ENCODE measurements at regions of chr1 and their contacts with region 1.

Region 1: GRCh38 chr1:203267347-203267846 is 37.9 kb upstream of the BTG2 start:
- DNase-seq: peak; percentile 29
- H3K4me3 ChIP-seq: peak overlapping the region; percentile 72
- CTCF ChIP-seq: peak; percentile 82

Region 2: DNA sequence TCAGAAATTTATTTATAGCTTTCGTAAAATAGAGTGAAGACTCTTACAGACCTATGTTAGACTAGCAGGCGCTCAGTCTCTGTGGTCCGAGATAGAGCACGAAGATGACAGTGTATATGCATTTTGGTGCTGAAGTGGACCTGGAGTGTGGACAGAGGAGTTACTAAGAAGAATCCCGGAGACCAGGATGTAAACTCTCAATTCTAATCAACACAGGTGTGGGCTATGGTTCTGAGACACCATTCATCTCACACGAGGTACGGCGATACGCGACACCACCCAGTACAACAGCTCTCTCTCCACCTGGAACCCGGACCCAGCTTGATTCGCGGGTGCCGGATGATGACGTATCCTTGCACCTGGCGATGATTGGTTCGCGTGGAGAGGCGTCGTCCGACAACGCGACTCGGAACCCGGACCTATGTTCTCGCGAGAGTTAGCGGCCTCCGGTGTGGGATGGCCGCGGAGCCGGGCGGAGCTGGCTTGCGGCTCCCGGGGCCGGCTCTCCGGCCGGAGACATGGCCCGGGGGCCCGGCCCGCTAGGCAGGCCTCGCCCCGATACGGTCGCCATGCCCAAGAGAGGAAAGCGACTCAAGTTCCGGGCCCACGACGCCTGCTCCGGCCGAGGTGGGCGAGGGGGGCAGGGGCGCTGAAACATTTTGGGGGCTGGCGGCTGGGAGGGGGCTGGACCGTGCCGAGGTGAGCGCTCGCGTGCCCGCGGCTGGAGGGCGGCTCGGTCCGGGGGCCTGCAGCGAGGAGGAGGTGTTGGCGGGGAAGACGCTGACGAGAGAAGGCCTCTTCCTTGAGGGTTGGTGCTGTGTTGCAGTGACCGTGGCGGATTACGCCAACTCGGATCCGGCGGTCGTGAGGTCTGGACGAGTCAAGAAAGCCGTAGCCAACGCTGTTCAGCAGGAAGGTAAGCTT is 260.2 kb before region 1 on chr1 and contains the start of gene TMEM183A:
- CTCF ChIA-PET with region 1: interaction called, 12 read pairs
- POLR2A ChIA-PET with region 1: no interaction called
- DNase-seq: peak; percentile 54
- H3K4me3 ChIP-seq: peak within 1 kb of the TSS; percentile 86
- CTCF ChIP-seq: no peak

Region 3: GRCh38 chr1:203057911-203058675 is 209.3 kb before region 1 on chr1:
- CTCF ChIA-PET with region 1: interaction called, 32 read pairs
- POLR2A ChIA-PET with region 1: no interaction called
- DNase-seq: no peak
- H3K4me3 ChIP-seq: no peak overlapping the region
- CTCF ChIP-seq: no peak

Region 4: DNA sequence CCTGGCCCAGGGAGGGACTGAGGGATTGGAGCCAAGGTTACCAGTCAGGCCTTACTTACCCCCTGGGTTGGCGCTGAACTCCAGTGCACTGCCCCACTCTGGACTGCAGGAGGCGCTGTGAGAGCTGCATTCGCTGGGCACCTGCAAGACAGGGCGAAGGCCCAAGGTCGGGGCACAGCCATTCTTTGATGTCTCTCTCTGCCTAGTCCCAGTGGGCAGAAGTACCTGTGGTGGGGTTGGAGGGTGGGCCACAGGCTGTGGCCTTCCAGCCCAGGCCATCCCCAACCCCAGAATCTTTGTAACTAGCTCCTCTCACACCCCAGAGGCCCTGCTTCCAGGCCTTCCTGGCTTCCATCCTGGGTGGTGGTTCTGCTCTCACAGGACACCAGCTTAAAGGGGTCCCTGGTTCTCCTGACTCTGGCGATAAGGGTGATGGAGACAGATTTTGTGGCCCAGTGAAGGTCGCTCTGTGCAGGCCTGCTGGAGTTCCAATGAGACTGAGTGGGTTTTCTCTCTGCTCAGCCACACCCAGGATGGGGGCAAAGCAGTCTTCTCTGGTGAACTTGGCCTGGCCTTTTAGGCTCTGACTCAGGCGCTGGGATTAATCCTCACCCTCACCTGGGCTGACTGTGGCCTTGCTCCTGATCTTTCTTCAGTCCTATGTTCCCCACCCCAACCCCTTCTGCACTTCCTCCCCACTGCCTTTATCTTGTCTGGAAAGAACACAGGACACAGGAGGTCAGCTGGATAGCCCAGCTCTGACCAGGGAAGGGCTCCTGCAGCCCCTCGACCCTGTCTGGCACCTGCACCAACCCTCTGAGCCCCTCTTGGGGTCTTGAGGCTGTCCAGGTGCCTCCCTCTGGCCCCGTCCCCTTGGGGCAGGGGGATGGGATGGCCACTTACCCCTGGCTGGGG is 182.6 kb before region 1 on chr1:
- CTCF ChIA-PET with region 1: interaction called, 11 read pairs
- POLR2A ChIA-PET with region 1: no interaction called
- DNase-seq: no peak
- H3K4me3 ChIP-seq: no peak overlapping the region
- CTCF ChIP-seq: peak; percentile 39

Region 5: GRCh38 chr1:203216274-203217138 is 50.9 kb before region 1 on chr1:
- CTCF ChIA-PET with region 1: interaction called, 21 read pairs
- POLR2A ChIA-PET with region 1: no interaction called
- DNase-seq: no peak
- H3K4me3 ChIP-seq: no peak overlapping the region
- CTCF ChIP-seq: peak; percentile 56

Region 6: DNA sequence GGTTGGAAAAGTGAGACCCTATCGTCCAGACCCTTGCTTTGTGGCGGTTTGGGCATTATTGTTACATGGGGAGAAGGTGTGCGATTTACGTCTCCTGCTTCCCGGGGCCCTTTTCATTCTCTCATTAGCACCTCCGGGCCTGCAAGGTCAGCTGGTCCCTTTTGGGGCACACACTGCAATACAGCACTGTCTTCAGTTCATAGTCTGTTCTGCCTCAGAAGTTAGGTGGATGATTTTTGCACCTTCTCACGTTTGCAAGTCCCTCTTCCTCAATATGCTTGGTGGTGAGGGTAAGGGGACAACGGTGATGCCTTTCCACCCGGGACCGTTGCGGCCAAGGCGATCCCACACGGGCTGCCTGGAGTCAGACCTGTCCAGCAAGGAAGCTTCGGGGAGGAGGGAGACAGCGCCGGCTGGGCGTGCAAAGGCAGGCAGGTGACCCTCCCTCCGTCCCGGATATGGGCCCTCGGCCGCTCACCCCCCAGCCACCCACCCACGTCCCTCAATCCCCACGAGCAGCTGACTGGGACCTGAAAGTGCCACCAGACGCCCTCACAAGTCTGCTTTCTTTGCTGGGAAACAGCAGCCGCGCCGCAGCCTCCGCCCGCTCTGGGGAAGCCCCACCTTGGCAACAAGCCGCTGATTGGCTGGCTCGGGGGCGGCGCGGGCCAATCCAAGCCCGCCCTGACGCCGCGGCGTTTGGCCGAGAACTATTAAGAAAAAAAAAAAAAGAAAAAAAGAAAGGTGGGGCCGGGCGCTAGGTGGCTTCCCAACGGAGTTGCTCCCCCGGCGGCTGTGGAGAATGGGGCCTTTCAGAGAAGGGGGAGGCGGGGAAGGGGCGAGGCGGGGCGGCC is 59.7 kb after region 1 on chr1:
- CTCF ChIA-PET with region 1: interaction called, 152 read pairs
- POLR2A ChIA-PET with region 1: no interaction called
- DNase-seq: no peak
- H3K4me3 ChIP-seq: peak overlapping the region; percentile 63
- CTCF ChIP-seq: no peak

Region 7: DNA sequence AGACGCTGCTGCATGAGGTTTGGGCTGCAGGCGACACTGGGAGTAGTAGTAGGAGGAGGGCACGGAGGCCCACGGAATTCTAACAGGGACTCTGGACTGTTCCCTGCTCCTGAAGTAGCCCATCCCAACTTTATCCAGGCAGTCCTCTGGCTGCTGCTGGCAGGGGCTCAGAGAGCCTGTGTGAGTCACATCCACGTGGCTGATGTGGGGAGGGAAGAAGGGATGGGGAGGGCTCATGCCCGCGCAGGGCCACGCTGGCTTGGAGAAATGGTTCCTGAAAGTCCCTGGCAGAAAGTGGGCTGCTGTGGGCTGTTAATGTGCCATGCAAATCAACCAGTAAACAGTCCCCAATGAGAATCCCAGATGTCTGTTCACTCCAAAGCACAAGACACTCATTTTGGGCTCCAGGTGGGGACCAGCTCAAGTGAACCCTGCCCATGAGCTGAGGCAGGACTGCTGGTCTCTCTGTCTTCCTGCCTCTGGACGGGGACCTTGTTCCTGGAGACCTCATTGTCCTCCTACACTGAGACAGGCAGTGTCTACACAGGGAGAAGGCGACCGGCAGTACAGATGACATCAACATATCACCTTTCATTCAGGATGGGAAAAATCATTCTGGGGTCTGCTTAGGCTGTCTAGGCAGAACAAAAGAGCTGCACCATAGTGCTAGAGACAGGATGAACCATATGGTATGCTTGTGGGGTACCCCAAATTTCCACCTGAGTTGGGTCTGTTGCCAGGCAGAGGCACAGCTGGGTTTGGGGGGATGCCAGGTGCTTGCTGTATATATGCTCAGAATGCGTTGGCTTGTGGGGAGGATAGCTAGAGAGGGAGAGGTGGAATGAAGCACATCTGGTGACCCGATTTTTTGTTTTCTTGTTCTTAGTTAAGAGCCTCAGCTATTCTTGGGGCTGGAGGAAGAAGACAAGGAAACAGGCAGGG is 141.4 kb after region 1 on chr1:
- CTCF ChIA-PET with region 1: no interaction called
- POLR2A ChIA-PET with region 1: no interaction called
- DNase-seq: no peak
- H3K4me3 ChIP-seq: no peak overlapping the region
- CTCF ChIP-seq: no peak

Region 8: GRCh38 chr1:203519078-203519770 is 251.8 kb after region 1 on chr1:
- CTCF ChIA-PET with region 1: no interaction called
- POLR2A ChIA-PET with region 1: no interaction called
- DNase-seq: no peak
- H3K4me3 ChIP-seq: no peak overlapping the region
- CTCF ChIP-seq: no peak